ENCODE measurements at regions of chr16 and their contacts with region 1.

Region 1: DNA sequence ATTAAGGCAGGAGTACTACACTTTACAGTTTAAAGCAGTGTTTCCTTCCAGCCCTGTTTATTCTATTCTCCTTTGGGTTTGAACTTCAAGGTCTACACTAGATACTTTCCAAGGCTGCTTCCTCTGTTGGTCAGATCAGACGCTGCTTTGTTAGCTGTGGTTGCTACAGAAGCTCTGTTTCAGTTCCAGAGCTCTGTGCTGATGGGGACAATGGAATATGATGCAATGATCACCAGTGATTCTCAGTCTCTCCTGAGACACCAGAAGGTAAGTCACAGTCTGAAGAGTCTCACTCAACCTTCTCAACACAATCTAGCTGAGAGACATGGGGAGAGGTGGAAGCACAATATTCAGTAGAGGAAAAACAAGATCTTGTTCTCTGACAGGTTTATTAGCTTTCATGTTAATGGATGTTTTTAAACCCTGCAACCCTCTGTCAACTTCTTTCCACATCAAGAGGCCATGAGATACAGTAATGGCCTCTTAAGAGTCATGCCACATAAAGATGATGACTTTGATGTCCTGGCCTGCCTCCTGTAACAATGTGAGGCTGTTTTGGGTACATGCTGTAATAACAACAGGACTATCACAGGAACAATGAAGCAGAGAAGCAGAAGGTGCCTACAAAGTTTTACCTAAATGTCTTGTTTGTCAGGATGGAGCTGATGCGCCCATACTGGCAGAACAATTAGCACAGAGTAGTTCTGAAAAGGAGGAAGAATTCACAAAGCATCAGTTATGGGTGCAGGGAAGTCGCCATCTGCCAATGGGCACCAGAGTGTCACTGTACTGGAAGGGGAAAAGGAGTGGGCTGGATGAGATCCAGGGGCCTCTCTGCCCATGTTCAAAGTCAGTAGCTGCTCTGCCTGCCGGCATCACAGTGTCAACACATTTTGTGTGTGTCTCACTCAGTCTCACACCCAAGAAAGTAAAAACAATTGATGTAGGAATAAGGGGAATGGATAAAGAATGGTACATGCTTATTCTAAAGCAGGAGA is 33.4 kb downstream of the PSME3IP1 start:
- DNase-seq: no peak
- ATAC-seq: no peak
- H3K4me3 ChIP-seq: no peak overlapping the region
- H3K27ac ChIP-seq: no peak overlapping the region
- H3K4me1 ChIP-seq: peaks cover 4% of the 10 kb centered on the region; the same call in 1 of the 2 replicates
- H3K27me3 ChIP-seq: no peaks in the 10 kb centered on the region
- CTCF ChIP-seq: no peak
- POLR2A ChIP-seq: no peak
- RAD21 ChIP-seq: no peak

Region 2: GRCh38 chr16:56807011-56807675 is 345.3 kb before region 1 on chr16:
- CTCF ChIA-PET with region 1: no interaction called
- POLR2A ChIA-PET with region 1: no interaction called
- dilution Hi-C with region 1: no loop called
- in situ Hi-C with region 1: no loop called
- intact Hi-C with region 1: no loop called
- DNase-seq: peak; percentile 84
- ATAC-seq: peak; percentile 95
- H3K4me3 ChIP-seq: no peak overlapping the region
- H3K27ac ChIP-seq: peak overlapping the region; percentile 63
- H3K4me1 ChIP-seq: peaks cover 14% of the 10 kb centered on the region
- H3K27me3 ChIP-seq: no peaks in the 10 kb centered on the region
- CTCF ChIP-seq: no peak
- POLR2A ChIP-seq: no peak
- RAD21 ChIP-seq: no peak

Region 3: DNA sequence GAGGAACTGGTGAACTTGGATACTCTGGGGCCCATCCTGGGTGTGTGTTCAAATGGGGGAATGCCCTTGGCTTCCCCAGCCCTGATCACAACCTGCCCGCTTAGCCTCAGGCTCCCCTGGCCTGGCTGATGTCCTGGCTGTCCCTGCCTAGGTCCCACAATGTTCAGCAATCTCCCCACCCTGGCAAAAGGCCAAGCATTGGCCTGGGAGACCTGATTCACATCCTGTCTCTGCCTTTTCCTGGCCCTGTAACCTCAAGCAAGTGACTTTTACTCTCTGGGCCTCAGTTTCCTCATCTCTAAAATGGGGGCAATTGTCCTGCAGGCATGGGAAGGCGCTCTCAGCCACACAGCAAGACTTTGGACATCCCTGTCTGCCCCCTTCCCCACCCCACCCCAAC is 45.6 kb before region 1 on chr16:
- CTCF ChIA-PET with region 1: no interaction called
- POLR2A ChIA-PET with region 1: interaction called, 18 read pairs
- dilution Hi-C with region 1: no loop called
- in situ Hi-C with region 1: no loop called
- intact Hi-C with region 1: no loop called
- DNase-seq: no peak
- ATAC-seq: no peak
- H3K4me3 ChIP-seq: no peak overlapping the region
- H3K27ac ChIP-seq: no peak overlapping the region
- H3K4me1 ChIP-seq: no peaks in the 10 kb centered on the region
- H3K27me3 ChIP-seq: no peaks in the 10 kb centered on the region
- CTCF ChIP-seq: no peak
- POLR2A ChIP-seq: no peak
- RAD21 ChIP-seq: no peak